ENCODE measurements at regions of chr17 and their contacts with region 1.

Region 1: DNA sequence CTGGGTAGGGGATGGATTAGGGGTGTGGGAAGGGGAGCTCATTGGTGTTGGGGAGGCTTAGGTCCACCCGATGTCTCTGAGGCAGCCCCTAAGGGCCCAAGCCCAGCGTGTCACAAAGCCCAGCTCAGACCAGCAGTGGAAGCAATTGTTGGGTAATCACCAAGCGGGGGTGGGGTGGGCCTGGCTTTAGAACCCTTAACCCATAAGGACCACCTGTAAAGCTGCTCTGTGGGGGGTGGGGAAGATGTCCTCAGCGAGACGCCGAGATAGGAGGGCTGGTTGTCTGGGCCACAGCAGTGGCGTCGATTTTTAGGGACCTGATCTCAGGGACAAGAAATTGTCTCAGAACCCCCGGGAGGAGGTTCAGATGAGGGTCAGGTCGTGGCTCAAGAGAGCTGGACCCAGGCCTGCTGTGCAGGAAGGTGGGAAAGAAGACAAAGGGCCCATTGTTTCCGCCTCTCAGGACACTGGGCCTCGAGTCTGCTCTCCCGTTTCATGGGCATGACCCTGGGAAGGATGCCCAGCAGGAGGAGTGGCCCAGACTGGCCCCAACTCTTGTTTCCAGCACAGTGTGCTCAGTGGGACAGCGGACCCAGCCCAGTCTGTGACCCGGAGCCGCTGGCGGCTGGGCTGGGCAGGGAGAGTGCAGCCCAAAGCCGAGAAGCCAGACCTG is 15.9 kb downstream of the ST6GALNAC2 start:
- DNase-seq: no peak
- H3K4me3 ChIP-seq: no peak overlapping the region
- H3K27ac ChIP-seq: peak overlapping the region in 1 of 4 donors; percentile 2
- H3K4me1 ChIP-seq: peaks cover 0 to 59% (median 5%) of the 10 kb centered on the region in 3 donors
- H3K27me3 ChIP-seq: no peaks in the 10 kb centered on the region
- CTCF ChIP-seq: no peak
- POLR2A ChIP-seq: no peak

Region 2: GRCh38 chr17:76614912-76615617 is 45.3 kb after region 1 on chr17:
- intact Hi-C with region 1: loop called (anchors 5 kb)
- DNase-seq: no peak
- H3K4me3 ChIP-seq: no peak overlapping the region
- H3K27ac ChIP-seq: no peak overlapping the region
- H3K4me1 ChIP-seq: peaks cover 0 to 24% (median 6%) of the 10 kb centered on the region in 3 donors
- H3K27me3 ChIP-seq: no peaks in the 10 kb centered on the region
- CTCF ChIP-seq: no peak
- POLR2A ChIP-seq: no peak